Esophagus muscularis mucosa (tissue), 4 donors: ENCODE measurements at regions of chr1 and their contacts with region 1.

Region 1: DNA sequence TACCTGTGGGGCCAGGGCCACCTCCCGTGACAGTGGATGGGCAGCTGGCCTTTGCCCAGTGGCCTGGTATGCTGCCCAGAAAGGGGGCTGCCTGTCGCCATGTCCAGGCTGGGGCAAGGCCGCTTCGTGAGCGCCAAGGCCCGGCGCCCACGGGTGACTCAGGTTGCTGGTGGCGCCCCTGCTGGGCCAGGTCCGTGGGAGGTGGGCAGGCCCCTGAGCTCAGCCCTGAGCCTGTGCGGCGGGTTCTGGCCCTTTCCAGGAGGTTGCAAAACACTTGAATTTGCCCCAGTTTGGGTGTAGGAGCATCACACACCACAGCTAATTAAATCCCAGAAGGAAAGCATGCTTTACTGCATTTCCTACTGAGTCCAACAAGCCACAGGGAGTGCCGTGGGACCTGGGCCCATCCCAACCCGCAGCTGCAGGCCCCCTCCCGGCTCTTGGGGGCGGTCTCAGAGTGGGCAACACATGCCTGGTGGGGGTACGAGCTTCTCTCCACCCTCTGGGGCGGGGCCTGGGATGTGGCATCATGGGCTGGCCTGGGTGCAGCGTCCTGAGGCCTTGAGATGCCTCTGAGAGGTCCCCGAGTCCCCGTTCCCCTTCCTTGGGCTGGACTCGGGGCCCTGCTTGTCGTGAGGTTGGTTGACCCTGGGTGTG is 159.8 kb downstream of the PEX14 start:
- DNase-seq: no peak
- H3K4me3 ChIP-seq: no peak overlapping the region
- H3K27ac ChIP-seq: peak overlapping the region; percentile 68 to 83 (median 74)
- H3K4me1 ChIP-seq: peaks cover 12 to 83% (median 68%) of the 10 kb centered on the region in 4 donors
- H3K27me3 ChIP-seq: no peaks in the 10 kb centered on the region
- CTCF ChIP-seq: no peak
- EP300 ChIP-seq: no peak
- POLR2A ChIP-seq: no peak

Region 2: GRCh38 chr1:10530281-10530740 is 104.2 kb before region 1 on chr1:
- intact Hi-C with region 1: loop called (anchors 5 kb)
- DNase-seq: no peak
- H3K4me3 ChIP-seq: peak overlapping the region in 1 of 4 donors; percentile 22
- H3K27ac ChIP-seq: peak overlapping the region; percentile 49 to 77 (median 72)
- H3K4me1 ChIP-seq: peaks cover 26 to 45% (median 42%) of the 10 kb centered on the region in 4 donors
- H3K27me3 ChIP-seq: no peaks in the 10 kb centered on the region
- CTCF ChIP-seq: peak; percentile 80 to 89 (median 82)
- EP300 ChIP-seq: no peak
- POLR2A ChIP-seq: no peak